ENCODE measurements at regions of chr6 and their contacts with region 1.

Region 1: DNA sequence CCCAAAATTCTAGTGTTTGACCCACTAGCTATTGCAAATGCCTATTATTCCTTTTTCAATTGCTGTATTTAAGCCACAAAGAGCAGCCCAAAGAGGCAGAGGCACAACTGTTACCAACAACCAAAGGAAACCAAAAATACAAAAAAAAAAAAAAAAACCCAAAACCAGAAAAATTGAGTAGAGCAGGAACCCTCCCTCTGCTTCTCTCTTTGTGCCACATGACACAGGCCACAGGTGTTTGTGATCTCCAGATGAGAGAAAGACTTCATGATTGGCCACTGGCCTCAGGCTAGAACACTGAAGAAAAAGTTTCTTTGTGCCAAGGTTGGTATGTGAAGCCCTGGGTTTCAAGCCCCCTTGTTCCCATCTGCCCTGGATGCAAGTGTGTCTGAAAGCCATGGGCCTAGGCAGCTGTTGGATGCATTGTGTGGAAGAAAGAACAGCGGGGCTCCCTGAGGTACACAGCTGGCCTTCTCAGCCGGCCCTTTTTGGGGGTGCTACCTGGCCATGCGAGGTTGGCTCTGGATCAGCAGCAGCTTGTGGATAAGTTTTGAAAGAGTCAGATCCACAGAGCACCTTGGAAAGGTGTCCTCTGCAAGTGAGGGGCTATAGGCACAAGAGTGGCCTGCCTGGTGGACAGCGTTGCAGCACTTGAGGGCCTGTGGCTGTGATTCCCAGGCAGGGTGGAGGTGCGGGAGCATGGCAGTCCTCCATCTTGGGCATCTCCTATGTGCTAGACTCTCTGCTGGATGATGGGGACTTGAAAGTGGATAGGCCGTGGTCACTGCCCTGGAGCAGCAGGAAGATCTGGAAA is 204.5 kb downstream of the ZDHHC14 start:
- DNase-seq: no peak
- H3K4me3 ChIP-seq: no peak overlapping the region
- H3K27ac ChIP-seq: no peak overlapping the region
- H3K4me1 ChIP-seq: peaks cover 2% of the 10 kb centered on the region
- H3K27me3 ChIP-seq: no peaks in the 10 kb centered on the region
- CTCF ChIP-seq: no peak
- POLR2A ChIP-seq: no peak

Region 2: DNA sequence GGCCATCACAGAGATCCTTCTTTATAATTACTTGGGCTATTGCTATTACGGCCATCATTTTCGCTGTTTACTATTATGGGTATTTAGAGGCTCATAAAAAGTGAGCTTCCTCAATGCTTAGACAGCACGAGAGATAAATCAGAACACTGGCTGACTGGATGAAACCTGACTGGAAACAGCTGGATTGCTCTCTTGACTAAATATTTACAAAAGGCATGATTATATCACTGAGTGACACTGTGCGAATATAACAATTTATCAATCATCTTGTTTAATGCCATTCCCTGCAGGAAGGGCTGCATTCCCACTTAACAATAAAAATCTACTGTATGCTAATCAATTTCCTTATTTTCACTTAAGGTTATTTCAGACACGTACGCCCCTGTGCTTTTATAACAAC is 1068.4 kb before region 1 on chr6:
- intact Hi-C with region 1: no loop called
- DNase-seq: no peak
- H3K4me3 ChIP-seq: no peak overlapping the region
- H3K27ac ChIP-seq: no peak overlapping the region
- H3K4me1 ChIP-seq: no peaks in the 10 kb centered on the region
- H3K27me3 ChIP-seq: no peaks in the 10 kb centered on the region
- CTCF ChIP-seq: no peak
- POLR2A ChIP-seq: no peak

Region 3: DNA sequence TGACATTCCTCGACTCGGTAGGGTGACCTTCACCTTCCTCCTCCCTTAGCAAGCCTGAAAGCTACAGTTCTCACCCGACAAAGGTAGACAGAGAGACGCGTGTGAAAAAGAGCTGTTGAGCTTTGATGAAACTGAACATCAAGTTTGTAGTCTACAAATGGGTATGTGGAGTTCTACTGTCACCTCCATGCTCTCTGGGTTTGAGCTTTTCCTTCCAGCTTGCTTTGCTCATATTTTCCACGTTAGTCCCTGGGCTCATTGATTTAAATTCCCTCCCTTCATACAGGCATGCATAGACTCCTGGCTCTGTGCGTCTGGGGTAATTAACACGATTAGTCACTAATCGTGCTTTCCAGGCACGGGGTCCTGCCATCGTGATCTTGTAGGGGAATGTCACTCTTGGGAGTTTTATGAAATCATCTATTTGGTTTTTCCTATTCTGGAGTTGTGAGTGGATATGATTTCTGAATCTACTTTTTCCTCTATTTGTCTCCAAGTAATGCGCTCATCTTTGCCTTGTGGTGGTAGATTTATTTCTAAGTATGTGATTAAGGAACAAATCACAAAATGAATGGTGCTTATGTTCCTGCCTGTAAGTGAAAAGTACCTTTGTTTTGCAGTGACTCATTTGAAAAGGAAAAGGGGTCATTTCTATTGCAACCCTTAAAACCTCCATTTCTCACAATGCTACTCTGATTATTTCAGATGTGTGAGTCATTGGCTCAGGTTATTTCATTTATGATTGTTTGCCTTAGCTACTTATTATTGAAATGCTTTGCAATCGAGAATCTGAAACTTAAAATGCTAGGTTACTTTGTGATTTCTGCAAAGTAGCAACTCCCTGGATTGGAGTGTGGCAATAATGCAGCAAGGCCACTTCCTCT is 49.9 kb before region 1 on chr6:
- intact Hi-C with region 1: no loop called
- DNase-seq: no peak
- H3K4me3 ChIP-seq: no peak overlapping the region
- H3K27ac ChIP-seq: peak overlapping the region; percentile 12
- H3K4me1 ChIP-seq: peaks cover 19% of the 10 kb centered on the region
- H3K27me3 ChIP-seq: no peaks in the 10 kb centered on the region
- CTCF ChIP-seq: no peak
- POLR2A ChIP-seq: no peak

Region 4: DNA sequence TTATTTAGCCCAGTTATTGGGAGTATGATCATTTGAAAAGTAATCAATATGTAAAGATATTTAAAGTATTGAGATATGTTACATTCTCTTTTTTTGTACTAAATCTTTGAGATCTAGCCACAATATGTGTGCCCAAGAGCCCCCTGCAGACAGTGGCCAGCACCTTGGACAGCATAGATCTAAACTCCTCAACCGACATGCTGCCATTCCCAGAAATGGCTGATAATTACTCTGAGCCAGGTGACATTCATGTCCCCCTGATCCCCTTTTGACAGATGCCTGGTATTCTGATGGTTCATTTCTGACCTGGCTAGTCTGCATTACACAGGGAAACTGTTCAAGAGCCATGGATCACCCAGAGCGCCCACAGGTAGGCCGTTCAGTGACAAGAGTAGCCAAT is 27.4 kb before region 1 on chr6:
- intact Hi-C with region 1: loop called (anchors 2 kb)
- DNase-seq: peak in 1 of 2 donors; percentile 44
- H3K4me3 ChIP-seq: no peak overlapping the region
- H3K27ac ChIP-seq: no peak overlapping the region
- H3K4me1 ChIP-seq: peaks cover 4% of the 10 kb centered on the region
- H3K27me3 ChIP-seq: no peaks in the 10 kb centered on the region
- CTCF ChIP-seq: no peak
- POLR2A ChIP-seq: no peak